SK-N-SH (cell line): ENCODE measurements at regions of chr19 and their contacts with region 1.

Region 1: GRCh38 chr19:33241530-33242101 is 16.0 kb upstream of the SLC7A10 start:
- DNase-seq: peak; percentile 72
- H3K4me3 ChIP-seq: no peak overlapping the region
- H3K27ac ChIP-seq: no peak overlapping the region
- H3K4me1 ChIP-seq: peaks cover 0 to 8% of the 10 kb centered on the region in 2 experiments; a peak in 1 of 4 replicates
- H3K27me3 ChIP-seq: no peaks in the 10 kb centered on the region
- CTCF ChIP-seq: peak; percentile 66
- EP300 ChIP-seq: no peak
- RAD21 ChIP-seq: peak; percentile 74

Region 2: DNA sequence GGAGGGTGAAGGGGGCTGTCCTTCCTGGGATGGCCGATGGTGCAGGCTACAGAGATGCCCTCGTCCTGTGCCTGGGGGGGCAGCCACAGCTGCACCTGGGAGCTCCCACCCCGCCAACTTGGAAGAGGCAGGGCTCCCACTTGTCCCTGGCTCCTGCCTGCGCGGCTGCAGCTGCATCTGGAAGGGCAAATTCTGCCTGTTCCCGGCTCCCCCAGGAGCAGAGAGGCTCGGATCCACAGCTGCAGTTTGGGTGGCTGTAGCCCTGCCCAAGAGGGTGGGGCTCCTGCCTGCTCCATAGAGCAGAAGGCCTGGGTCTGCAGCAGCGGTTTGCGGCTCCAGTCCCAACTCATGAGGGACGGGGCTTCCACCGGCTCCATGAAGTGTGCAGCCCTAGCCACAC is 272.0 kb before region 1 on chr19:
- CTCF ChIA-PET with region 1: no interaction called
- POLR2A ChIA-PET with region 1: no interaction called
- DNase-seq: no peak
- H3K4me3 ChIP-seq: no peak overlapping the region
- H3K27ac ChIP-seq: no peak overlapping the region
- H3K4me1 ChIP-seq: peaks cover 0 to 10% of the 10 kb centered on the region in 2 experiments; a peak in 1 of 4 replicates
- H3K27me3 ChIP-seq: no peaks in the 10 kb centered on the region
- CTCF ChIP-seq: no peak
- EP300 ChIP-seq: no peak
- RAD21 ChIP-seq: no peak

Region 3: GRCh38 chr19:33226550-33227241 is 14.9 kb before region 1 on chr19:
- CTCF ChIA-PET with region 1: interaction called, 34 read pairs
- POLR2A ChIA-PET with region 1: no interaction called
- DNase-seq: peak; percentile 85
- H3K4me3 ChIP-seq: no peak overlapping the region; a peak in 1 of 4 replicates
- H3K27ac ChIP-seq: no peak overlapping the region
- H3K4me1 ChIP-seq: no peaks in the 10 kb centered on the region; a peak in 1 of 4 replicates
- H3K27me3 ChIP-seq: peaks cover 38% of the 10 kb centered on the region
- CTCF ChIP-seq: no peak
- EP300 ChIP-seq: no peak
- RAD21 ChIP-seq: no peak

Region 4: DNA sequence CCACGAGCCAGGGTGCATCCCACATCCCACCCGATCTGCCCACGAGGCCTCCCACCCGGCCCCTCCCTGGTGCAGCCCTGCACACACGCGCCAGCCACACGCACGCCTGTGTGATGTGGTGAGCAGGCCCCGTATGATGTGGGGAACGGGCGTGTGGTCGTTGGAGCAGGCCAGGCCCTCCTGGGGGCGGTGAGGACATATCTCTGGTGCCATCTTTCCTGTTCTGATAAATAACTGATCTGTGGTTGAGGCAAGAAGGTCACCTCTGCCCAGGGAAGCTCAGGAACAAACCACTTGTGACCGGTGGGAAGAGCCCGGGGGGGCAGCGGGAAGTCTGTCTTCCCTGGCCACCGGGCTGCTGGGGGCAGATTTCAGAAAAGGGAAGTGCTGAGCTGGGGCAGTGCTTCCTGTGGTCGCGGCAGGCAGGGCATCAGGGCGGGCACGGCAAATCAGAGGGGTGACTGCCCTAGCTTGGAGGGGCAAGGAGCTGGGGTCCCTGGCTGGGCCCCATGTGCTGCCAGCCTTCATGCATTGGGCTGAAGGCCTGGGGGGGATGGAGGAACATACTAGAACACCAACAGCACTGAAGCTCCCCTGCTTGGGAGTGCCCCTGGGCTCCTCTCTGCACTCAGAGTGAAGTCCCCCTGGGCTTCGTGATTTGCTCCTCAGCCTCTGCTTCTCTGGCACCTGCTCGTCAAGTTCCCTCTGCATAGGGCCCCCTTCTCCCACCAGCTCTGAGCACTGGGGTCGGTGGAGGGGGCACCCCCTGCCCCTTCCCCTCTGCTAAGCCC is 19.2 kb after region 1 on chr19:
- CTCF ChIA-PET with region 1: interaction called, 12 read pairs
- POLR2A ChIA-PET with region 1: no interaction called
- DNase-seq: no peak
- H3K4me3 ChIP-seq: no peak overlapping the region
- H3K27ac ChIP-seq: no peak overlapping the region
- H3K4me1 ChIP-seq: peaks cover 0 to 12% of the 10 kb centered on the region in 2 experiments; a peak in 1 of 4 replicates
- H3K27me3 ChIP-seq: no peaks in the 10 kb centered on the region
- CTCF ChIP-seq: no peak
- EP300 ChIP-seq: no peak
- RAD21 ChIP-seq: no peak

Region 5: DNA sequence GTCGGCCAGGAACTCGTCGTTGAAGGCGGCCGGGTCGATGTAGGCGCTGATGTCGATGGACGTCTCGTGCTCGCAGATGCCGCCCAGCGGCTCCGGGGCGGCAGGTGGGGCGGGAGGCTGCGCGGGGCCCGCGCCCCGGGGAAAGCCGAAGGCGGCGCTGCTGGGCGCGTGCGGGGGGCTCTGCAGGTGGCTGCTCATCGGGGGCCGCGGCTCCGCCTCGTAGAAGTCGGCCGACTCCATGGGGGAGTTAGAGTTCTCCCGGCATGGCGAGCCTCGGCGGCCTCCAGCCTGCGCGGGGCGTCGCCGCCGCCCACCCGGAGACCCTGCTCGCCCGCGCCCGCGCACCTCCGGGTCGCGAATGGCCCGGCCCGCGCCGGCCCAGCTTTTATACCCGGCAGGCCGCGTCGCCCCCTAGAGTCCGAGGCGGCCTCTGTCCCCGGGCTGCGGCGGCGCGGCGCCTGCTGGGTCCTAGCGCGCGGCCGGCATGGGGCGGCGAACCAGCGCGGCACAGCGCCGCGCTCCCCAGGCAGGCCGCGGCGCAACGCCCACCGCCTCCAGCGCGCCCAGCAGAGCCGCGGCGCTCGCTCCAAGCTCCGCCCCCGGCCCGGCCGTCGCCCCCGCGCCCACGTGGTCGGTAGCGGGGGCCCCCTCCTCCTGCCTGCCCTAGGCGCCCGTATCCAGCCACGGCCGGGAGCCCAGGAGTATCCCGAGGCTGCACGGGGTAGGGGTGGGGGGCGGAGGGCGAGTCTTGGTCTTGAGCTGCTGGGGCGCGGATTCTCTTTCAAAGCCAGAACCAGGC is 60.8 kb after region 1 on chr19 and contains the start of gene CEBPA:
- CTCF ChIA-PET with region 1: interaction called, 12 read pairs
- POLR2A ChIA-PET with region 1: no interaction called
- DNase-seq: peak; percentile 96
- H3K4me3 ChIP-seq: peak within 1 kb of the TSS; percentile 57 to 68
- H3K27ac ChIP-seq: no peak within 1 kb of the TSS
- H3K4me1 ChIP-seq: peaks cover 0 to 4% of the 10 kb centered on the region in 2 experiments; a peak in 1 of 4 replicates
- H3K27me3 ChIP-seq: peaks cover 54% of the 10 kb centered on the region
- CTCF ChIP-seq: peak; percentile 45
- EP300 ChIP-seq: no peak
- RAD21 ChIP-seq: peak; percentile 35; the same call in 1 of the 2 replicates
- polyA plus RNA-seq, gene CEBPA: 0.06 and 0.15 TPM in 2 replicates

Region 6: GRCh38 chr19:33383722-33384292 is 142.2 kb after region 1 on chr19:
- CTCF ChIA-PET with region 1: interaction called, 15 read pairs
- POLR2A ChIA-PET with region 1: no interaction called
- DNase-seq: no peak
- H3K4me3 ChIP-seq: no peak overlapping the region
- H3K27ac ChIP-seq: no peak overlapping the region
- H3K4me1 ChIP-seq: peaks cover 0 to 14% of the 10 kb centered on the region in 2 experiments; a peak in 1 of 4 replicates
- H3K27me3 ChIP-seq: no peaks in the 10 kb centered on the region
- CTCF ChIP-seq: no peak
- EP300 ChIP-seq: no peak
- RAD21 ChIP-seq: no peak

Region 7: GRCh38 chr19:33416307-33417215 is 174.9 kb after region 1 on chr19:
- CTCF ChIA-PET with region 1: interaction called, 511 read pairs
- POLR2A ChIA-PET with region 1: no interaction called
- DNase-seq: peak; percentile 87
- H3K4me3 ChIP-seq: no peak overlapping the region; a peak in 1 of 4 replicates
- H3K27ac ChIP-seq: no peak overlapping the region
- H3K4me1 ChIP-seq: peaks cover 0 to 40% of the 10 kb centered on the region in 2 experiments; a peak in 1 of 4 replicates
- H3K27me3 ChIP-seq: no peaks in the 10 kb centered on the region
- CTCF ChIP-seq: peak; percentile 61
- EP300 ChIP-seq: no peak
- RAD21 ChIP-seq: peak; percentile 77